HepG2 (cell line): ENCODE measurements at regions of chr9 and their contacts with region 1.

Region 1: GRCh38 chr9:137618105-137619067 is at the start of gene EHMT1:
- DNase-seq: peak; percentile 67
- ATAC-seq: peak; percentile 76
- H3K4me3 ChIP-seq: peak within 1 kb of the TSS; percentile 90 to 99 (median 96)
- H3K27ac ChIP-seq: peak within 1 kb of the TSS; percentile 85
- H3K4me1 ChIP-seq: peaks cover 38% of the 10 kb centered on the region
- H3K27me3 ChIP-seq: no peaks in the 10 kb centered on the region; a peak in 1 of 5 replicates
- CTCF ChIP-seq: peak; percentile 37; the same call in 1 of the 2 replicates
- EP300 ChIP-seq: 0 out of 4 replicates have a peak, but pooled peaks of 1 of the 2 experiments have one; percentile 24
- POLR2A ChIP-seq: peak in 1 of 2 experiments; percentile 68; a peak in 2 of 4 replicates
- RAD21 ChIP-seq: peak; percentile 47
- total RNA-seq, gene EHMT1: 19.2 and 23.0 TPM in 2 replicates

Region 2: DNA sequence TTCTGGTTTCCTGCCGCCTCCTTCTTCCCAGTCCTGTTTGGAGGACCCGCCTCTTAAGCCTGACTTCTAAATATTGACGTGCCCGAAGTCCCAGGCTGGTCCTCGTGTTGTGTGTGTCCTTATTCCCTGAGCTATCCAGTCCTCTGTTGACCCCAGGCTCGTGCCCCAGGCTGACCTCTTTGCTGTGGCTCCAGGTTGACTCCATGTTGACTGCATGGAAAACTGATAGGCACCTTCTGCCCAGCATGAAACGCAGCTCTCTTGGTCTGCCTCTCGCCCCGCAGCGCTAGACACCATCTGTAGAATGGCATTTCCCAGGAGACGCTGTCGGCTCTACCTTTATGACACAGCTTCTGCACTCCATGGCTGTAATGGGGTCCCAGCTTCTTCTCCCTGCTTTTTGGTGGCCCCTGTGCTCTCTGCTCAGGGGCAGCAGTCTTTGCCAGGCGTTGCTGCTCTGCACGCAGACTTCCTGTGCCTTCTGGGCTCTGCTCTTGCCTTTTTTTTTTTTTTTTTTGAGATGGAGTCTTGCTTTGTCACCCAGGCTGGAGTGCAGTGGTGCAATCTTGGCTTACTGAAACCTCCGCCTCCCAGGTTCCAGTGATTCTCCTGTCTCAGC is 28.8 kb after region 1 on chr9:
- CTCF ChIA-PET with region 1: no interaction called
- POLR2A ChIA-PET with region 1: no interaction called
- in situ Hi-C with region 1: no loop called
- intact Hi-C with region 1: no loop called
- DNase-seq: no peak
- ATAC-seq: no peak
- H3K4me3 ChIP-seq: no peak overlapping the region
- H3K27ac ChIP-seq: no peak overlapping the region
- H3K4me1 ChIP-seq: peaks cover 19% of the 10 kb centered on the region
- H3K27me3 ChIP-seq: no peaks in the 10 kb centered on the region
- CTCF ChIP-seq: no peak
- EP300 ChIP-seq: no peak
- POLR2A ChIP-seq: no peak
- RAD21 ChIP-seq: no peak

Region 3: GRCh38 chr9:137664592-137665039 is 46.2 kb after region 1 on chr9:
- CTCF ChIA-PET with region 1: no interaction called
- POLR2A ChIA-PET with region 1: interaction called, 3 read pairs
- in situ Hi-C with region 1: no loop called
- intact Hi-C with region 1: loop called (anchors 5 kb)
- DNase-seq: peak; percentile 75
- ATAC-seq: peak; percentile 80
- H3K4me3 ChIP-seq: no peak overlapping the region
- H3K27ac ChIP-seq: no peak overlapping the region
- H3K4me1 ChIP-seq: peaks cover 40% of the 10 kb centered on the region
- H3K27me3 ChIP-seq: no peaks in the 10 kb centered on the region
- CTCF ChIP-seq: no peak
- EP300 ChIP-seq: 0 out of 4 replicates have a peak, but pooled peaks of 1 of the 2 experiments have one; percentile 28
- POLR2A ChIP-seq: no peak
- RAD21 ChIP-seq: no peak